ENCODE measurements at regions of chr20 and their contacts with region 1.

Region 1: DNA sequence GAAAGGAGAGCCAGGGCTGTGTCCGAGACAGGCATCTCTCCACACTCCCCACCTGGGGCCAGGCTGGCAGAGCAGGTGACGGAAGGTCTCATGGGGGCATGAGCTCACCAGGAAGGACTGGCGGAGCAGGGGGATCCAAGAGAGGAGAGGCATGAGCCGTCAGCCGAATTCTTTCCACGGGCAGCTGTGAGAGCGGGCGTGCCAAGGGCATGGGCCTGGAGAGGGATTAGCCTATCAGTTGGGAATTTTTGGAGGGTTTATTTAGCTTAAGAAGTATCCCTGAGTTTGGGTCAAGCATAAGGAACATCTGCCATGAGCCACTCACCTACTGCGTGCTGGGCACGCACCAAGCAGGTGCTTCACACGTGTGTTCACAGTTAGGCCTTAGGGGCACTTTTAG is 60.2 kb upstream of the ZNFX1 start:
- DNase-seq: no peak
- H3K4me3 ChIP-seq: no peak overlapping the region
- H3K27ac ChIP-seq: no peak overlapping the region
- H3K4me1 ChIP-seq: no peaks in the 10 kb centered on the region
- H3K27me3 ChIP-seq: no peaks in the 10 kb centered on the region
- CTCF ChIP-seq: no peak
- POLR2A ChIP-seq: no peak

Region 2: GRCh38 chr20:49534255-49534712 is 196.2 kb after region 1 on chr20:
- intact Hi-C with region 1: loop called (anchors 2 kb)
- DNase-seq: peak; percentile 46
- H3K4me3 ChIP-seq: no peak overlapping the region
- H3K27ac ChIP-seq: no peak overlapping the region
- H3K4me1 ChIP-seq: no peaks in the 10 kb centered on the region
- H3K27me3 ChIP-seq: no peaks in the 10 kb centered on the region
- CTCF ChIP-seq: peak; percentile 37 to 86 (median 76)
- POLR2A ChIP-seq: no peak

Measured in prostate gland (tissue), 2 donors.